K562 (cell line): ENCODE measurements at regions of chr1 and their contacts with region 1.

Region 1: GRCh38 chr1:204207136-204207616 is 6.6 kb downstream of the GOLT1A start:
- DNase-seq: peak; percentile 70 to 91 (median 87)
- ATAC-seq: peak; percentile 100
- H3K4me3 ChIP-seq: no peak overlapping the region
- H3K27ac ChIP-seq: no peak overlapping the region
- H3K4me1 ChIP-seq: peaks cover 0 to 2% of the 10 kb centered on the region in 2 experiments; a peak in 1 of 5 replicates
- H3K27me3 ChIP-seq: peaks cover 7 to 35% of the 10 kb centered on the region in 2 experiments; a peak in 4 of 5 replicates
- CTCF ChIP-seq: peak; percentile 89 to 94 (median 89)
- EP300 ChIP-seq: no peak
- POLR2A ChIP-seq: no peak
- RAD21 ChIP-seq: peak; percentile 86 to 90

Region 2: DNA sequence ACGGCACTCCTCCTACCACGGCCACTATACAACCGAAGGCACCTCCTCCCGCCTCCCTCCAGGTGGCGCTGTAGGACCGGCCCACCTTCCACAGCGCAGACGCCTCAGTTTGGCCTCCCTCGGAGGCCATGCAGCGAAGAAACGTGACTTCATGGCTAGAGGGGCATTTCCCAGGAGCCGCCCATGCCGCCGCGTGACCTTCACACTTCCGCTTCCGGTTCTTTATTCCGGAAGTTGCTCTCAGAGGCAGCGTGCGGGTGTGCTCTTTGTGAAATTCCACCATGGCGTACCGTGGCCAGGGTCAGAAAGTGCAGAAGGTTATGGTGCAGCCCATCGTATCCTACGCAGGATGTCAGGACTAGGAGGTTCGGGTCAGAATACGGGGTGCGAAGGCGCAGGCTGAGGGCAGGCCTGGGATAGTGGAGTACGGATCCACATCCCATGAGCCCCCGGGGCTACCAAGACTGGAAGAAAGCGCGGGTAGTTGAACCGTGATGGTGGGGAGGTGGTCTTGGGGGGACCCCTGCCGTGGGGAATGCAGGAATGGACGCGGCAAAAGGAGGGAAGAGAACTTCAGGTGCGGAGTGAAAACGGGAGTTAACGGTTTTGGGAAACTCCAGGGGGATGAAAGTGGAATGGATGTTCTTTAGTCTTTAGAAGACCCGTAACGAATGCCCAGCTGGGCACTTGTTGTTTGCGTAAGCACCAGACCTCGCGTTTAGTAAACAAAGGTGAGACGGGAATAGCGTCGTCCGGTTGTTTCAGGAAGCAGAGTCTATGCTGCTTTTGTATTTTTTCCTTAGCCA is 345.6 kb before region 1 on chr1 and contains the start of gene SNRPE:
- CTCF ChIA-PET with region 1: interaction called, 3 read pairs
- POLR2A ChIA-PET with region 1: no interaction called
- in situ Hi-C with region 1: no loop called
- intact Hi-C with region 1: loop called (anchors 2 kb)
- DNase-seq: peak; percentile 96 to 100 (median 97)
- ATAC-seq: peak; percentile 97
- H3K4me3 ChIP-seq: peak within 1 kb of the TSS; percentile 92
- H3K27ac ChIP-seq: peak within 1 kb of the TSS; percentile 95
- H3K4me1 ChIP-seq: peaks cover 4 to 10% of the 10 kb centered on the region in 2 experiments; a peak in 4 of 5 replicates
- H3K27me3 ChIP-seq: no peaks in the 10 kb centered on the region
- CTCF ChIP-seq: peak; percentile 96 to 99 (median 98)
- EP300 ChIP-seq: peak; percentile 59
- POLR2A ChIP-seq: peak; percentile 99
- RAD21 ChIP-seq: peak; percentile 98 to 99
- polyA plus RNA-seq, gene SNRPE: 1,614 to 1,893 TPM

Region 3: GRCh38 chr1:204127598-204128242 is 79.5 kb before region 1 on chr1:
- CTCF ChIA-PET with region 1: no interaction called
- POLR2A ChIA-PET with region 1: no interaction called
- in situ Hi-C with region 1: no loop called
- intact Hi-C with region 1: no loop called
- DNase-seq: peak; percentile 50 to 71 (median 64)
- ATAC-seq: peak; percentile 47
- H3K4me3 ChIP-seq: no peak overlapping the region
- H3K27ac ChIP-seq: no peak overlapping the region
- H3K4me1 ChIP-seq: peaks cover 0 to 15% of the 10 kb centered on the region in 2 experiments; a peak in 2 of 5 replicates
- H3K27me3 ChIP-seq: peaks cover 27 to 46% of the 10 kb centered on the region in 2 experiments; a peak in 4 of 5 replicates
- CTCF ChIP-seq: peak; percentile 83 to 89 (median 86)
- EP300 ChIP-seq: no peak
- POLR2A ChIP-seq: no peak
- RAD21 ChIP-seq: peak; percentile 87

Region 4: DNA sequence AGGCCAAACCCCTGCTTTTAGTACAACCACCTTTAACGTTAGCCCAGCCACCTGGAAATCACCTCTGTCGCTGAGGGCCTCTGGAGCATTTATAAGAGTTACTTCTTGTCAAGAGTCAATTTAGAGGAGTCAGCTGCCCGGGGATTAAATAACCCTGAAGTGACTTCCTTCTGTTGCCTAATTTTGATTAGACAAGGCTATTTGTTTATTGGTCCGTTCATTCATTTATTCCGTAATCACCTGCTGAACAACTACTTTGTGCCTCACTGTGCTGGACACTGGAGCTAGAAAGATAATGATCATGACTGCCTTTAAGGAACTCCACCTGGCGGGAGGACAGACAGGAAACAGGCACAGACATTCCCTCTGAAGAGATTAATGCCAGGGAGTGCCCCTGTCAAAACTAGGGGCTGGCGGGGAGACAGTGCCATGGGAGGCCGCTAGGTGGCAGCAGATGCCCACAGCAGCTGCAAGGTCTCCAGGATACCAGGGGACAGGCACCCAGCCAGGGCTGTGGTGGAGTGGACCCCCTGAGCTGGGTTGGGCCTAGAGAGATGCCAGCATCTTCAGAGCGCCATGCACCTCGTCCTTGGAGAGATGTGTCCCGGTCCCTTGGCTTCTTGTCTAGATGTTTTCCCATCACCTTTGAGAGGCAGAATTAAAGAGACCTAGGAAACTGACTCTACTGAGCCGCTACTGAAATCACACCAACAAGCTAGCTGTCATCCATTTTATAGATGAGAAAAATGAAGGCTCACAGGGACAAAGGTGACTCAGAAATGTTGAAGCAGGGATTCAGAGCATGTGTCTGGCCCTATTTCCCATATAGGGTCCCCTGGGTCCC is 44.7 kb before region 1 on chr1:
- CTCF ChIA-PET with region 1: interaction called, 3 read pairs
- POLR2A ChIA-PET with region 1: interaction called, 3 read pairs
- in situ Hi-C with region 1: no loop called
- intact Hi-C with region 1: loop called (anchors 1 kb)
- DNase-seq: peak; percentile 76 to 94 (median 90)
- ATAC-seq: peak; percentile 98
- H3K4me3 ChIP-seq: no peak overlapping the region
- H3K27ac ChIP-seq: no peak overlapping the region
- H3K4me1 ChIP-seq: no peaks in the 10 kb centered on the region
- H3K27me3 ChIP-seq: peaks cover 3 to 43% of the 10 kb centered on the region in 2 experiments; a peak in 4 of 5 replicates
- CTCF ChIP-seq: peak; percentile 96 to 99 (median 98)
- EP300 ChIP-seq: no peak
- POLR2A ChIP-seq: no peak
- RAD21 ChIP-seq: peak; percentile 99 to 100

Region 5: DNA sequence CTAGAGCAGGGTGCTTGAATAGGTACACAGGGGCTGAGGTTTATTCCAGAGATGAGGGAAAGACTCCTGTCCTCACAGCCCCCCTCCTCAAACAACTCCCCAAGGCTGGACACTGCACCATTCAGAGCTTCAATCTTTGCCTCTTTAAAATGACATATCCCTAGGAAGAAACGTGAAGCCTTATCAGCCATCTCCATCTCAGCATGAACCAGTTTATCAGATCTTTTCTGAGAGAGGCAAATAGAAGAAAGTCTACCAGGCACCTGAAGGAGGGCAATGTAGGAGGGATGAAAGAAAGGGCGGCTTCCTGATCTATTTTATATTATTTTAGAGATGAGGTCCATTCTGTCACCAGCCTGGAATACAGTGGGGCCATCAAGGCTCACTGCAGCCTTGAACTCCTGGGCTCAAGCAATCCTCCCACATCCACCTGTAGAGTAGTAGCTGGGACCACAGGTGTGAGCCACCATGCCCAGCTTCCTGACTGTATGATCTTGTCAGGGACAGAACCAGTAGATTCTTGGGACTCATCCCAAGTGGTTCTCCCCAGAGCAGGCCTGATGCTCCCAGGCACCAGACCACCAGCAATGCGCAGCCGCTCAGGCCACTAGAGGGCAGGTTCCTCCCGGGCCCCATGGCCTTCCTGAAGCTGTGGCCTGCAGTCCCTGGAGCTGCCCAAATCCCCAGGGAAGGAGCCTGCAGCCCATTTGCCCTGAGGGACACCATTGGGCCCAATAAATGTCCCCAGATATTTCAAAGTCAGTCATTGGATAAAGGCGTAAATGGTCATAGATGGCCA is 51.0 kb after region 1 on chr1:
- CTCF ChIA-PET with region 1: no interaction called
- POLR2A ChIA-PET with region 1: no interaction called
- in situ Hi-C with region 1: no loop called
- intact Hi-C with region 1: no loop called
- DNase-seq: peak; percentile 66 to 79 (median 74)
- ATAC-seq: peak; percentile 92
- H3K4me3 ChIP-seq: no peak overlapping the region
- H3K27ac ChIP-seq: no peak overlapping the region
- H3K4me1 ChIP-seq: peaks cover 0 to 4% of the 10 kb centered on the region in 2 experiments; a peak in 1 of 5 replicates
- H3K27me3 ChIP-seq: peaks cover 35 to 92% of the 10 kb centered on the region in 2 experiments; a peak in 4 of 5 replicates
- CTCF ChIP-seq: peak; percentile 80 to 88 (median 84)
- EP300 ChIP-seq: no peak
- POLR2A ChIP-seq: no peak
- RAD21 ChIP-seq: peak; percentile 92

Region 6: DNA sequence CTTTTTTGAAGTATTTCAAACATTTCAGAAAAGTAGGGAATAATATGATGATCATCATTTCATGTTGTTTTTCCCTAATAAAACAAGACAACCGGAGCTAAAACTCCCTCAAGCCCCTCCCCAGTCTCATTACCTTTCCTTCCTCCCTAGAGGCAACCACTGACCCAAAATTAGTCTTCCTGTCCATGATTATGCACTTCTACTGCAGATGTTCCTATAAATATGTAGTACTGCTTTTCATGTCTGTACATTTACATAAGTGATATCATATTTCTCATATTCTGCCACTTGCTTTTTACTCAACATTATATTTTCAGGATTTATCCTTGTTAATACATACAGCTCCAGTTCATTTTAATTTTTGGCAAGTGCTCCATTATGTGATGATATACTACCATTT is 65.3 kb after region 1 on chr1:
- CTCF ChIA-PET with region 1: no interaction called
- POLR2A ChIA-PET with region 1: no interaction called
- in situ Hi-C with region 1: no loop called
- intact Hi-C with region 1: no loop called
- DNase-seq: no peak
- ATAC-seq: no peak
- H3K4me3 ChIP-seq: no peak overlapping the region
- H3K27ac ChIP-seq: no peak overlapping the region
- H3K4me1 ChIP-seq: no peaks in the 10 kb centered on the region
- H3K27me3 ChIP-seq: peaks cover 21 to 57% of the 10 kb centered on the region in 2 experiments
- CTCF ChIP-seq: no peak
- EP300 ChIP-seq: no peak
- POLR2A ChIP-seq: no peak
- RAD21 ChIP-seq: no peak

Region 7: DNA sequence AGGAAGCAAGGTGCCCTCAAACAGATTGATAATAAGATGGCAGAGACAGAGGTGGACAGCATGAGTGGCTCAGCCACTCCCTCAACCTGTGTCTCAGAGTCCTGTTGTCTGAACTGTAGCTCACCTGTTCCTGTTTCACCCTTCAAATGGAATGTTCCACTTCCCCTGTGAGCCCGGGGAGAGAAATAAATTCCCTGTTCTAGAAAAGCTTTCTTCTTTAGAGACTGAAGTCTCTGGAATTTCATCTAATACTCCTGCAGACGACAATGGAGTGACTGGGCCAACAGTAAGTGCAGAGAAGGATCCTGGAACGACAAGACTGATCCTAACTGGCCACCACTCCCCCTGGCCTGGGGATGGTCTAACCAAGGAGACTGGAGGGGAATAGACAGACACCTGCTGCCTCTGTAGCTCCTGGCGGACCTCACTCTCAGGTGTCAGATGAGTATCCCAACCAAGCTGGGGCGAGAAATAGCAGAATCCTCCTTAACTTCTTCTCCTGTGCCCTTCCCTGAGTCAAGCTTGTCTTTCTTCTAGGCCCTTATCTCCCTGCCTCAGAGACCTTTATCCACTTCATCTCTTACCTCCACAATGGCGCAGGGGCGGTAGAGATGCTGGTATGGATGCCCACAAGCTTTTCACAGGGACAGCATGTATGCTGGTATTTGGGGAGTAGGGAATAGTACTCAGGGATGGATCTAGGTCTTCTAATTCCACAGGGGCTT is 107.2 kb after region 1 on chr1:
- CTCF ChIA-PET with region 1: no interaction called
- POLR2A ChIA-PET with region 1: no interaction called
- in situ Hi-C with region 1: no loop called
- intact Hi-C with region 1: no loop called
- DNase-seq: no peak
- ATAC-seq: no peak
- H3K4me3 ChIP-seq: no peak overlapping the region
- H3K27ac ChIP-seq: no peak overlapping the region
- H3K4me1 ChIP-seq: peaks cover 0 to 5% of the 10 kb centered on the region in 2 experiments; a peak in 2 of 5 replicates
- H3K27me3 ChIP-seq: peaks cover 35 to 68% of the 10 kb centered on the region in 2 experiments
- CTCF ChIP-seq: no peak
- EP300 ChIP-seq: no peak
- POLR2A ChIP-seq: no peak
- RAD21 ChIP-seq: no peak

Region 8: GRCh38 chr1:204494281-204495077 is 287.3 kb after region 1 on chr1 and contains the start of gene PIK3C2B:
- CTCF ChIA-PET with region 1: no interaction called
- POLR2A ChIA-PET with region 1: no interaction called
- in situ Hi-C with region 1: no loop called
- intact Hi-C with region 1: loop called (anchors 5 kb)
- DNase-seq: peak; percentile 88 to 92 (median 91)
- ATAC-seq: peak; percentile 99
- H3K4me3 ChIP-seq: peak within 1 kb of the TSS; percentile 49
- H3K27ac ChIP-seq: no peak within 1 kb of the TSS
- H3K4me1 ChIP-seq: peaks cover 14 to 15% of the 10 kb centered on the region in 2 experiments; a peak in 4 of 5 replicates
- H3K27me3 ChIP-seq: peaks cover 29 to 39% of the 10 kb centered on the region in 2 experiments
- CTCF ChIP-seq: peak; percentile 59 to 85 (median 66); a peak in 5 of 6 replicates
- EP300 ChIP-seq: no peak
- POLR2A ChIP-seq: no peak
- RAD21 ChIP-seq: peak; percentile 79 to 81
- polyA plus RNA-seq, gene PIK3C2B: 0.10 to 0.27 TPM